ENCODE measurements at regions of chr3 and their contacts with region 1.

Region 1: GRCh38 chr3:196609343-196609775 is 30.1 kb upstream of the NRROS start:
- DNase-seq: peak; percentile 95
- H3K4me3 Mint-ChIP-seq: peak overlapping the region; percentile 42
- H3K27ac Mint-ChIP-seq: peak overlapping the region; percentile 81
- H3K4me1 Mint-ChIP-seq: peaks cover 54% of the 10 kb centered on the region
- H3K27me3 Mint-ChIP-seq: peaks cover 6% of the 10 kb centered on the region

Region 2: DNA sequence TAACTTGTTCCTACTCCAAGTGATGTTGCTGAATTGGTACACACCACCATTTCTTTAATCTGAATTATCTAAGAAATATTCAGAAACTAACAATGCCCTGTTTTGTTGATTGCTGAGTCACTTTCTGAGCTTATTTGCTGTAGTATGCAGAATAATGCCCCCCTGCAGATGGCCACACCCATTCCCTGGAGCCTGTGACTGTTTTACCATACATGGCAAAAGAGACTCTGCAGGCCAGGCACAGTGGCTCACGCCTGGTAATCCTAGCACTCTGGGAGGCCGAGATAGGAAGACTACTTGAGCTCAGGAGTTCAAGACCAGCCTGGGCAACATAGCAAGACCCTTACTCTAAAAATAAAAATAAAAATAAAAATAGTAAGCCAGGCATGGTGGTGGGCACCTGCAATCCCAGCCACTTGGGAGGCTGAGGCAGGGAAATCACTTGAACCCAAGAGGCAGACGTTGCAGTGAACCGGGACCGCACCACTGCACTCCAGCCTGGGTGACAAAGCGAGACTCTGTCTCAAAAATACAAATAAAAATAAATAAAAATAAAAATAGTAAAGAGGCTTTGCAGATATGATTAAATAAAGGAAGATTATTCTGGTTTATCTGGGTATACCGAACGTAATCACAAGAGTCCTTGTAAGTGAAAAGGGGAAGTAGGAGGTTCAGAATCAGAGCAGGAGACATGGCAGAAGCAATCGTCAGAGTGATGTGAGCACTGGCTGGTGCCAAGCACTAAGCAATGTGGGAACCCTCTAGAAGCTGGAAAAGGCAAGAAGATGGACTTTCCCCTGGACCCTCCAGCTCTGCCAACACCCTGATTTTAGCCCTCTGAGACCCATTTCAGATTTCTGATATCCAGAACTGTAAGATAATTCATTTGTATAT is 340.8 kb before region 1 on chr3:
- CTCF ChIA-PET with region 1: no interaction called
- POLR2A ChIA-PET with region 1: no interaction called
- DNase-seq: peak; percentile 43
- H3K4me3 Mint-ChIP-seq: no peak overlapping the region
- H3K27ac Mint-ChIP-seq: peak overlapping the region; percentile 72
- H3K4me1 Mint-ChIP-seq: peaks cover 45% of the 10 kb centered on the region
- H3K27me3 Mint-ChIP-seq: no peaks in the 10 kb centered on the region

Region 3: GRCh38 chr3:196568246-196569002 is 40.9 kb before region 1 on chr3 and contains the starts of genes FBXO45 and WDR53:
- CTCF ChIA-PET with region 1: interaction called, 11 read pairs
- POLR2A ChIA-PET with region 1: interaction called, 7 read pairs
- DNase-seq: peak; percentile 97
- H3K4me3 Mint-ChIP-seq: peak within 1 kb of the TSS; percentile 97
- H3K27ac Mint-ChIP-seq: peak within 1 kb of the TSS; percentile 95
- H3K4me1 Mint-ChIP-seq: peaks cover 54% of the 10 kb centered on the region
- H3K27me3 Mint-ChIP-seq: no peaks in the 10 kb centered on the region
- total RNA-seq, gene FBXO45: 19.7 TPM
- total RNA-seq, gene WDR53: 27.2 to 29.3 TPM

Region 4: GRCh38 chr3:196639483-196640296 is 30.3 kb after region 1 on chr3 and contains the start of gene NRROS:
- CTCF ChIA-PET with region 1: interaction called, 118 read pairs
- POLR2A ChIA-PET with region 1: interaction called, 177 read pairs
- DNase-seq: peak; percentile 82
- H3K4me3 Mint-ChIP-seq: peak within 1 kb of the TSS; percentile 73
- H3K27ac Mint-ChIP-seq: peak within 1 kb of the TSS; percentile 86
- H3K4me1 Mint-ChIP-seq: peaks cover 65% of the 10 kb centered on the region
- H3K27me3 Mint-ChIP-seq: no peaks in the 10 kb centered on the region
- total RNA-seq, gene NRROS: 50.1 to 52.8 TPM

Region 5: DNA sequence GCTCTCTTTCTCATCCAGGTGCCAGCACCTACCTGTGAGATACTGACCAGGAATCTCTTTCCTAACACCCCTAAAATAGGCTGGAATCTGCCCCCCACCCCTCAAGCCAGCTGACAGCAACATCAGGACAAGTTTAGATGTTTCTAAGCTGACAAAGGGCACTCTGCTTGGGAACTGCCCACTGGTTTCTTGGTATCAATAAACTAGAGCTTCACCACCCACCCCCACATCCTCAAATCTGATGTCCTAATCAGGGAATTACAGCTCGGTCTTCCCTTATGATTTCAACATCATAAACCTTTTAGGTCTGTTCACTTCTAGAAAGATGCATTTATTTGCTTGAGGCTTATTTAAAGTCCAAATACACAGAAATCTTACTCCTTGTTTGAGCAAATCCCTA is 68.0 kb after region 1 on chr3:
- CTCF ChIA-PET with region 1: interaction called, 20 read pairs
- POLR2A ChIA-PET with region 1: interaction called, 8 read pairs
- DNase-seq: no peak
- H3K4me3 Mint-ChIP-seq: no peak overlapping the region
- H3K27ac Mint-ChIP-seq: no peak overlapping the region
- H3K4me1 Mint-ChIP-seq: peaks cover 27% of the 10 kb centered on the region
- H3K27me3 Mint-ChIP-seq: no peaks in the 10 kb centered on the region

Region 6: DNA sequence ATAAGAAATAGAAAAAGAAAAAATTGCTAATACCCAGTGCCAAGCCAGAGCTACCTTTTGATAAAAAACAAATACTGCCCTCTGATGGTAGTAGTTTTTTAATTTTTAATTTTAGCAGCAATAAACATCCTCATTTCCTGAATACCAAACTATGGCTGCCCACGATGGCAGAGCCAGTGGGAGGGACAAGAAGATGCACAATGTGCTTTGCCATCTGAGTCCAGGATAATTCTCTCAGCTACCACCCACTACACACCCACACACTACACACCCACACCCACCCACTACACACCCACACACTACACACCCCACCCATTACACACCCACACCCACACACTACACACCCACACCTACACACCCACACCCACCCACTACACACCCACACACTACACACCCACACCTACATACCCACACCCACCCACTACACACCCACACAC is 84.9 kb after region 1 on chr3:
- CTCF ChIA-PET with region 1: interaction called, 219 read pairs
- POLR2A ChIA-PET with region 1: no interaction called
- DNase-seq: peak; percentile 28
- H3K4me3 Mint-ChIP-seq: no peak overlapping the region
- H3K27ac Mint-ChIP-seq: no peak overlapping the region
- H3K4me1 Mint-ChIP-seq: peaks cover 14% of the 10 kb centered on the region
- H3K27me3 Mint-ChIP-seq: no peaks in the 10 kb centered on the region

Region 7: DNA sequence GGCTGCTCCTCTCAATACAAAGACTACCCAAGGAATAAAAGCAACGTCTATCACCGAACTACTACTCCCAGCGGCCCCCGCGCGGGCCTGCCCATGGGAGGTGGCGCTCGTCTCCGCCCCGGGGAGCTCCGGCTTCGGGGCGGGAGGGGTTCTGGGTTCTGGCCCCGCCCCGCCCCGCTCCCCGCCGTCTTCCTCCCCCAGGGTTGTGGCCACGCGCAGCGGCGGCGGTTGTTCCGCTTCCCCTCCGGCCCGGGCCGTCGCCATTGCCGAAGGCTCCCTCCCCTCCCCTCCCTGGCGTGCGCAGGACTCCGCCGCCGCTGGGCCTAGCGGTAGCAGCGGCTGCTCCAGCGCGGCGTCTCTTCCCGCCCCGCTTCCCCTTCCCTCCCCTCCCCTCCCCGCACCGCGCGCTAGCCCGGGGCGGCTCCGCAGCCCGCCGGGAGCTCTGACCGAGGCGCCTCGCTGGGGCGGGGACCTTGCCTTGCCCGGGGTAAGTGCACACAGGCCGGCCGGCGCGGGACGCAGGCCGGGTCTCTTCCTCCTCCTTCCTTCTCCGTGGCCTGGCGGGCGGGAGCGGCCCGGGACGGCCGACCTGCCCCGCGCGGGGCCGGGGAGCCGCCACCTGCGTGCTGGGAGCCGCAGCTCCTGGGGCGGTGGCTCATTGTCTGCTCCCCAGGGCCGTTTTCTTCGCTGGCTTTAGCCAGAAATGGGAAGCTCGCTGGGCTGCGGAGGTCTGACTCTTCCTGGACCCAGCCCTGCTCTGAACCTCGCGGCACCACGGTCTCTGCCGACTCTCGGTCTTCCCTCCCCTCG is 130.5 kb after region 1 on chr3 and contains the start of gene PAK2:
- CTCF ChIA-PET with region 1: interaction called, 9 read pairs
- POLR2A ChIA-PET with region 1: interaction called, 10 read pairs
- DNase-seq: peak; percentile 91
- H3K4me3 Mint-ChIP-seq: peak within 1 kb of the TSS; percentile 99
- H3K27ac Mint-ChIP-seq: peak within 1 kb of the TSS; percentile 98
- H3K4me1 Mint-ChIP-seq: peaks cover 28% of the 10 kb centered on the region
- H3K27me3 Mint-ChIP-seq: no peaks in the 10 kb centered on the region
- total RNA-seq, gene PAK2: 118 to 119 TPM

Measured in activated CD4-positive, alpha-beta memory T cell treated with anti-CD3 and anti-CD28 coated beads, Interleukin-2, amount 10 ng/mL, durations not matched to agents 7 days and 5 days (primary cell).